A549 (cell line): ENCODE measurements at regions of chr19 and their contacts with region 1.

Region 1: DNA sequence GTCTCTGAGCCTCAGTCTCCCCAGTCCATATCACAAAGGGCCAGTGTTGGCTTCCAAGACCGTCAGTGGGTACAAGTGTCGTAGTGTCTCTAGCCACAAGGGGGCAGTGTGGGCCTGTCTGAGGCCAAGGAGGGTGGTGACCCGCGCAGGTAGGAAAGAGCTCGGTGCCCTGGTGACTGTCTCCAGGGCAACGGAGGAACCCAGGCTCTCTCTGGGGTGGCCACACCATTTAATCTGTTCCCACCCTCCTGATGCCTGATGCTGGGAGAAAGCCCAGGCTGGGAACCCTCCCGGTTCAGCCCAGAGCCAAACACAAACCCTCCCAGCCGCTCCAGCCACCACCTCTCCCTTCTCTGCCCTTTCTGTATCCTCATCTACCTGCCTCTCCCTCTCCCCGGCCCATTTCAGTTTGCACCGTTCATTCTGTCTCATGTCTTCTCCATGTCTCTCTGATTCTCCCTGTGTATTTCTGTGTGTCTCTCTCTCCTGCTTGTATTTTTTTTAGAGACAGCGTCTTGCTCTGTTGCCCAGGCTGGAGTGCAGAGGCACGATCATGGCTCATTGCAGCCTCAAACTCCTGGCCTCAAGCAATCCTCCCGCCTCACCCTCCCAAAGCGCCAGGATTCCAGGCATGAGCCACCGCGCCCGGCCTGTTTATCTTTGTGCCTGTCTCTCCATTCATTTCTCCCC is 17.5 kb upstream of the MEIS3 start:
- DNase-seq: peak; percentile 82 to 86
- ATAC-seq: peak; percentile 84 to 95
- H3K4me3 ChIP-seq: no peak overlapping the region
- H3K27ac ChIP-seq: no peak overlapping the region
- H3K4me1 ChIP-seq: no peaks in the 10 kb centered on the region
- CTCF ChIP-seq: peak; percentile 92
- EP300 ChIP-seq: no peak
- POLR2A ChIP-seq: no peak
- RAD21 ChIP-seq: peak; percentile 96 to 99

Region 2: DNA sequence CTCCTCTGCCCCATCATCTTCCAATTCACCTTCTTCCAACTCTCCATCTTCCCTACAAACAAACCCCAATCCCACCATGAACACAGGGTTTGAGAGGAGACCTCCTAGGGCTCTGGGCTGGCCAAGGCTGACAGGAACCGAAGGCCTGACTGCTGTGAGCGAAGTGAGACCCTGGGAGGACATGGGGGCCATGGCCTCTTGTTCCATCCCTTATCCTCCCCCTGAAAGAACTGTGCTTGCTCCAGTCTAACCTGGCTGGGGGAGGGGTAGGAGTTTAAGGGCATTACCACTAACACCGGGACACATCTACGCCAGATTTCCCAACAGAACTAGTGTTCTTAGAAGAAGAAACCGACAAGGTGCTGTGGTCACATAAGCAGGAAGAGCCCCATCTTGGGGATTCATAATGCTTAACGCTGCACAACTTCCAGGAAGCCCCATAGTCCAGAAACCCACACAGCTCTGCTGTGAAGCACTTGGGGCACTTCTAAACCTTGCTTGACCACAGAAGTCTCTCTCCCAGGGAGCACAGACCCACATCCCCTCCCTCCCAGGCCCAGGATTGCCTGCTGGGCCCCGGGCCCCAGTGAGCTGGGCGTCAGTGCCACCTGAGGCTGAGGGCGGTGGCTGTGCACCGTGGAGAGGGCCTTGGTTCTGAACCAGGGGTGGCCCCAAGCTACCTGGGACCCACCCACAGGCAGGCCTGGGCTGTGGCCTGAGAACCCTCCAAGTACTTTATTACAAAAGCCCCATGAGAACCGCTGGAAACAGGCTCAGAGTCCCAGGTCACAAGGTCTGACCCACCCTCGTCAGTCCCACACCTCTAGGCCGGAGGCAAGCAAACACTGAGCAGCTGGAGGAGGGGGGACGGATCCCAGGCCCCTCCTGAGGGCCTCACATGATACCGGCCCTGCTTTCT is 342.0 kb before region 1 on chr19:
- CTCF ChIA-PET with region 1: no interaction called
- POLR2A ChIA-PET with region 1: no interaction called
- DNase-seq: no peak
- ATAC-seq: no peak; a peak in 1 of 6 replicates
- H3K4me3 ChIP-seq: no peak overlapping the region
- H3K27ac ChIP-seq: peak overlapping the region; percentile 43 to 68; a peak in 3 of 6 replicates
- H3K4me1 ChIP-seq: peaks cover 26% of the 10 kb centered on the region
- CTCF ChIP-seq: no peak
- EP300 ChIP-seq: no peak
- POLR2A ChIP-seq: no peak
- RAD21 ChIP-seq: no peak

Region 3: GRCh38 chr19:47296036-47296435 is 140.8 kb before region 1 on chr19:
- CTCF ChIA-PET with region 1: interaction called, 10 read pairs
- POLR2A ChIA-PET with region 1: no interaction called
- DNase-seq: peak; percentile 88
- ATAC-seq: peak; percentile 95 to 99
- H3K4me3 ChIP-seq: no peak overlapping the region
- H3K27ac ChIP-seq: peak overlapping the region; percentile 44 to 59; a peak in 4 of 6 replicates
- H3K4me1 ChIP-seq: peaks cover 5% of the 10 kb centered on the region; the same call in 1 of the 3 replicates
- CTCF ChIP-seq: peak; percentile 98
- EP300 ChIP-seq: no peak
- POLR2A ChIP-seq: no peak
- RAD21 ChIP-seq: peak; percentile 97 to 99

Region 4: DNA sequence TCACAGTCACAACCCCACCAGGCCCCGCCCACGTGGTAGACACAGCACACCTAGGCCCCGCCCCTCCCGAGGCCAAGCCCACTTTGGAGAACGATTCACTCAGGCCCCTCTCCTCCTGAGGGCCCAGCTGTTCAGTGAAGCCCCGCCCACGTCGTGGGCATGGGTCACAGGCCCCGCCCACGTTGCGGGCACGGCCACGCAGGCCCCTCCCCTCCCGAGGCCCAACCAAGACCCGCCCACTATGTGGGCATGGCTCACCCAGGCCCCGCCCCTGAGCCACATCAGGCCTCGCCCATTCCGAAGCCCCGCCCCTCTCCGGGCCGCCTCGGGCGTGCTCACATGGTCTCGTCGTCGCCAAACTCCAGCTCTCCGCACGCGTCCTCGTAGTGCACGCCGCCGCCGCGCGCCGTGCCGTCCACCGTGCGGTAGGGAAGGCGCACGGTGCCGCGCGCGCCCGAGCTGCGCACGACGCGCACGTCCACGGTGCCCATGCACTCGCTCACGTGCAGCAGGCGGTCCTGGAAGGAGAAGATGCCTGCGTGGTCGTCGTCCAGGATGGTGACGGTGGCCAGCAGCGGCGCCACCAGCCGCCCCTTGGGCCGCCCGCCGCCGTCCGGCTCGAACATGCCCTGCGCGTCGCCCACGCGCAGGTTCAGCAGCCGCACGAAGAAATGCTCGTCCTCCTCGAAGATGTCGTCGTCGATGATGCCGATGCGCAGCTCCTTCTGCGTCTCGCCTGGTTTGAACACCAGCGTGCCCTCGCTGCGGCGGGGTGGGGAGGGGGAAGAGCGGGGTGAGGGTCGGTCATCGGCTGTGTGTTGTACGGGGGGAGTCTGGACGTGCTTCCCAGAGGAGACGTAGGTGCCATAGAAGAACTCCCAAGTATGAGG is 10.9 kb after region 1 on chr19:
- CTCF ChIA-PET with region 1: interaction called, 108 read pairs
- POLR2A ChIA-PET with region 1: interaction called, 3 read pairs
- DNase-seq: peak; percentile 67 to 92
- ATAC-seq: peak; percentile 54 to 72
- H3K4me3 ChIP-seq: peak overlapping the region; percentile 50
- H3K27ac ChIP-seq: peak overlapping the region; percentile 46 to 51; a peak in 5 of 6 replicates
- H3K4me1 ChIP-seq: peaks cover 26% of the 10 kb centered on the region
- CTCF ChIP-seq: no peak
- EP300 ChIP-seq: no peak
- POLR2A ChIP-seq: no peak
- RAD21 ChIP-seq: no peak

Region 5: GRCh38 chr19:47471733-47472457 is 35.0 kb after region 1 on chr19 and contains the start of gene SLC8A2:
- CTCF ChIA-PET with region 1: interaction called, 58 read pairs
- POLR2A ChIA-PET with region 1: no interaction called
- DNase-seq: peak; percentile 75 to 76
- ATAC-seq: peak; percentile 17 to 56; a peak in 5 of 6 replicates
- H3K4me3 ChIP-seq: peak within 1 kb of the TSS; percentile 41
- H3K27ac ChIP-seq: peak within 1 kb of the TSS in 1 of 2 experiments; percentile 69; a peak in 2 of 6 replicates
- H3K4me1 ChIP-seq: peaks cover 19% of the 10 kb centered on the region; the same call in 2 of the 3 replicates
- CTCF ChIP-seq: no peak
- EP300 ChIP-seq: no peak
- POLR2A ChIP-seq: no peak
- RAD21 ChIP-seq: no peak
- polyA plus RNA-seq, gene SLC8A2: 0.12 and 0.35 TPM in 2 replicates

Region 6: GRCh38 chr19:47499863-47500830 is 63.3 kb after region 1 on chr19:
- CTCF ChIA-PET with region 1: interaction called, 52 read pairs
- POLR2A ChIA-PET with region 1: no interaction called
- DNase-seq: no peak
- ATAC-seq: no peak
- H3K4me3 ChIP-seq: no peak overlapping the region
- H3K27ac ChIP-seq: no peak overlapping the region
- H3K4me1 ChIP-seq: no peaks in the 10 kb centered on the region
- CTCF ChIP-seq: no peak
- EP300 ChIP-seq: no peak
- POLR2A ChIP-seq: no peak
- RAD21 ChIP-seq: no peak

Region 7: GRCh38 chr19:47608074-47608918 is 171.4 kb after region 1 on chr19:
- CTCF ChIA-PET with region 1: interaction called, 11 read pairs
- POLR2A ChIA-PET with region 1: no interaction called
- DNase-seq: peak; percentile 94
- ATAC-seq: peak; percentile 85 to 93
- H3K4me3 ChIP-seq: peak overlapping the region; percentile 92
- H3K27ac ChIP-seq: peak overlapping the region; percentile 93 to 96
- H3K4me1 ChIP-seq: peaks cover 21% of the 10 kb centered on the region
- CTCF ChIP-seq: no peak
- EP300 ChIP-seq: no peak
- POLR2A ChIP-seq: peak; percentile 73
- RAD21 ChIP-seq: no peak

Region 8: GRCh38 chr19:47719047-47719859 is 282.4 kb after region 1 on chr19:
- CTCF ChIA-PET with region 1: interaction called, 901 read pairs
- POLR2A ChIA-PET with region 1: no interaction called
- DNase-seq: peak; percentile 79 to 91
- ATAC-seq: peak; percentile 85 to 86
- H3K4me3 ChIP-seq: peak overlapping the region; percentile 17; the same call in 2 of the 3 replicates
- H3K27ac ChIP-seq: peak overlapping the region; percentile 96 to 99
- H3K4me1 ChIP-seq: peaks cover 58% of the 10 kb centered on the region
- CTCF ChIP-seq: no peak
- EP300 ChIP-seq: 0 out of 5 replicates have a peak, but pooled peaks of 1 of the 2 experiments have one; percentile 20
- POLR2A ChIP-seq: no peak
- RAD21 ChIP-seq: no peak